ENCODE measurements at regions of chr17 and their contacts with region 1.

Region 1: GRCh38 chr17:63621766-63622519 is at the start of gene MAP3K3:
- DNase-seq: peak; percentile 98 to 100 (median 99)
- ATAC-seq: peak; percentile 95 to 98 (median 97)
- H3K4me3 ChIP-seq: peak within 1 kb of the TSS; percentile 67 to 96 (median 78)
- H3K27ac ChIP-seq: peak within 1 kb of the TSS; percentile 69 to 93 (median 88)
- H3K4me1 ChIP-seq: peaks cover 2 to 44% (median 37%) of the 10 kb centered on the region in 12 donors
- H3K27me3 ChIP-seq: no peaks in the 10 kb centered on the region
- CTCF ChIP-seq: peak in 4 of 12 donors; percentile 29 to 55 (median 48)
- POLR2A ChIP-seq: peak in 1 of 2 donors; percentile 87
- total RNA-seq, gene MAP3K3: 31.0 to 102 (median 58.0) TPM

Region 2: DNA sequence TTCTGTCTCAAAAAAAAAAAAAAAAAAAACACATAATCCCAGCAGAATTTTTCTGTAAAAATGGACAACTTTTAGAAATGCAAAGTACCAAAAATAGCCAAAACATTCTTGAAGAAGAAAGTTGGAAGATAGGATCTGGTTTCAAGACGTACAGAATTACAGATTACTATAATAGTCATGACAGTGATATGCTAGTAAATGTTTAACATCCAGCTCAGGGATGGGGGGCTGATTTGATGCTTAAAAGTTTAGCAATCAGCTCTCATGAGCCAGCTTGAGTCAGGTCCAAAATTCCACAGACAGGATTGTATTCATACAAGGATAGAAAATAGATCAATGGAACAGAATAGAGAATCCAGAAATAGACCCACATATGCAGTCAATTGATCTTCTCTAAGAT is 276.3 kb before region 1 on chr17:
- intact Hi-C with region 1: no loop called
- DNase-seq: no peak
- ATAC-seq: no peak
- H3K4me3 ChIP-seq: no peak overlapping the region
- H3K27ac ChIP-seq: no peak overlapping the region
- H3K4me1 ChIP-seq: peaks cover 0 to 2% (median 0%) of the 10 kb centered on the region in 12 donors
- H3K27me3 ChIP-seq: no peaks in the 10 kb centered on the region
- CTCF ChIP-seq: no peak
- POLR2A ChIP-seq: no peak

Region 3: GRCh38 chr17:63549946-63550807 is 71.8 kb before region 1 on chr17 and contains the start of gene DCAF7:
- intact Hi-C with region 1: no loop called
- DNase-seq: peak; percentile 98 to 100 (median 100)
- ATAC-seq: peak; percentile 97 to 99 (median 98)
- H3K4me3 ChIP-seq: peak within 1 kb of the TSS; percentile 66 to 99 (median 76)
- H3K27ac ChIP-seq: peak within 1 kb of the TSS; percentile 79 to 97 (median 90)
- H3K4me1 ChIP-seq: peaks cover 2 to 53% (median 38%) of the 10 kb centered on the region in 12 donors
- H3K27me3 ChIP-seq: no peaks in the 10 kb centered on the region
- CTCF ChIP-seq: peak in 1 of 12 donors; percentile 11
- POLR2A ChIP-seq: peak in 1 of 2 donors; percentile 62
- total RNA-seq, gene DCAF7: 30.2 to 61.8 (median 47.8) TPM

Region 4: GRCh38 chr17:63571763-63572271 is 50.1 kb before region 1 on chr17:
- intact Hi-C with region 1: no loop called
- DNase-seq: no peak
- ATAC-seq: peak in 1 of 4 donors; percentile 26
- H3K4me3 ChIP-seq: no peak overlapping the region
- H3K27ac ChIP-seq: no peak overlapping the region
- H3K4me1 ChIP-seq: peaks cover 0 to 3% (median 0%) of the 10 kb centered on the region in 12 donors
- H3K27me3 ChIP-seq: no peaks in the 10 kb centered on the region
- CTCF ChIP-seq: no peak
- POLR2A ChIP-seq: no peak

Region 5: GRCh38 chr17:63675607-63676413 is 53.9 kb after region 1 on chr17:
- intact Hi-C with region 1: loop called in 4 of 10 experiments (anchors 2 to 5 kb)
- DNase-seq: peak in 4 of 5 donors; percentile 82 to 87 (median 86)
- ATAC-seq: peak; percentile 84 to 93 (median 92)
- H3K4me3 ChIP-seq: peak overlapping the region in 10 of 12 donors; percentile 7 to 47 (median 33)
- H3K27ac ChIP-seq: peak overlapping the region; percentile 43 to 94 (median 86)
- H3K4me1 ChIP-seq: peaks cover 3 to 55% (median 37%) of the 10 kb centered on the region in 12 donors
- H3K27me3 ChIP-seq: no peaks in the 10 kb centered on the region
- CTCF ChIP-seq: no peak
- POLR2A ChIP-seq: no peak

Measured in heart left ventricle (tissue), 16 donors.